AG04449 (cell line): ENCODE measurements at regions of chr11 and their contacts with region 1.

Region 1: GRCh38 chr11:36478700-36479329 is 31.3 kb downstream of the TRAF6 start:
- DNase-seq: no peak
- H3K4me3 ChIP-seq: no peak overlapping the region
- CTCF ChIP-seq: peak; percentile 53

Region 2: GRCh38 chr11:36258730-36259360 is 220.0 kb before region 1 on chr11:
- CTCF ChIA-PET with region 1: interaction called, 20 read pairs
- POLR2A ChIA-PET with region 1: no interaction called
- DNase-seq: peak; percentile 36
- H3K4me3 ChIP-seq: no peak overlapping the region
- CTCF ChIP-seq: peak; percentile 76

Region 3: GRCh38 chr11:36271794-36272407 is 206.9 kb before region 1 on chr11:
- CTCF ChIA-PET with region 1: interaction called, 34 read pairs
- POLR2A ChIA-PET with region 1: no interaction called
- DNase-seq: no peak
- H3K4me3 ChIP-seq: no peak overlapping the region
- CTCF ChIP-seq: no peak

Region 4: GRCh38 chr11:36289226-36289852 is 189.5 kb before region 1 on chr11 and contains the start of gene COMMD9:
- CTCF ChIA-PET with region 1: interaction called, 565 read pairs
- POLR2A ChIA-PET with region 1: interaction called, 4 read pairs
- DNase-seq: peak; percentile 37
- H3K4me3 ChIP-seq: peak within 1 kb of the TSS; percentile 90
- CTCF ChIP-seq: no peak

Region 5: GRCh38 chr11:36376888-36377758 is 101.7 kb before region 1 on chr11:
- CTCF ChIA-PET with region 1: interaction called, 65 read pairs
- POLR2A ChIA-PET with region 1: no interaction called
- DNase-seq: no peak
- H3K4me3 ChIP-seq: peak overlapping the region; percentile 83
- CTCF ChIP-seq: peak; percentile 80

Region 6: DNA sequence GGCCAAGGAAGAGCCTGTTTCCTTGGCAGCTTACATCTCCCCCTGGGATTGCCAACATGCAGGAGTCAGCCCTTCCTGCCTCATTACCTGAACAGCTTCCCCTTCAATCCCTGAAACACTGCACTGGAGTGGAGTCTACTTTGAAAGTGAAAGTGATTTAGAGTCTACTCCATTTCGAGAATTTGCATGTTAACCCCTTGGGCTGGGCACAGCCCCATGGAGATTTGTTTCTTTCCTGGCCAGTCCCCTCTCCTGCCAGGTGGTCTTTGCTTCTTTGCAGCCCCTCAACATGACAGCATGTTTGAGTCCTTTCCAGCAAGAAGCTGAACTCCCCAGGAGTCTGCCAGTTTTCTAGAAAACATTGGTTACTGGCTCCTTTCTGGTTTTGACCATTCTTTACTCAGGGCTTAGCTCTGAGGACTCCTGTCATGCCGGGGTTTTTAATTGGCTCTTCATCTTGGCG is 28.7 kb before region 1 on chr11:
- CTCF ChIA-PET with region 1: interaction called, 10 read pairs
- POLR2A ChIA-PET with region 1: no interaction called
- DNase-seq: no peak
- H3K4me3 ChIP-seq: no peak overlapping the region
- CTCF ChIP-seq: no peak

Region 7: DNA sequence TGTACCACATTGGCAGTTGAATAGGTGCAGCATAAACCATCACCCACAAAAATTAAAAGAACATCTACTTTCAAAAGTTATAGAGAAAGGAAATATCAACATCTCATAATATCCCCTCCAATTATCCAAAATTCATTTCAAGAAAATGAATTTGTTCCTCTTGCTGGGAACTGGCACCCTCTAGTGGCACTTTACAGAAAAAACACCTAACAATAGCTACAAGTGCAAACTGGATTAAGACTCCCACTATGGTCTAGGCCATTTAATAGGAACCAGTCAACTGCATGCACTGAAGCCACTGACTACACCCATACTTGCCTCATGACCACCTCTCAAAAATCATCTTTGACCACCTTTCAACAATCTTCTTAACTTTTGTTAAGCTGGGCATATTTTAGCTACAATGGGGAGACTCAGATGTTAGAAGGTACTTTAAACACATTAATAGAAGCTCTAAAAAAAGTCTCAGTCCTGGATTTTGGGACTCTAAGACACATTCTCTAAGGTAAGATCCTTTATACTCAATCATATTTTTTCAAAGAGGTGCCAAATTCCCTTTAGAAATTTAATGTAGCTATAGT is 14.0 kb after region 1 on chr11:
- CTCF ChIA-PET with region 1: interaction called, 72 read pairs
- POLR2A ChIA-PET with region 1: no interaction called
- DNase-seq: no peak
- H3K4me3 ChIP-seq: no peak overlapping the region
- CTCF ChIP-seq: peak; percentile 51